Common myeloid progenitor, CD34-positive (primary cell): ENCODE measurements at regions of chr18 and their contacts with region 1.

Region 1: GRCh38 chr18:34221971-34222306 is 2.8 kb downstream of the NOL4 start:
- DNase-seq: peak in 2 of 3 donors; percentile 13 to 14
- H3K4me3 ChIP-seq: no peak overlapping the region
- H3K27ac ChIP-seq: no peak overlapping the region
- H3K4me1 ChIP-seq: peaks cover 0 to 28% (median 13%) of the 10 kb centered on the region in 4 experiments
- H3K27me3 ChIP-seq: peaks cover 4 to 80% (median 43%) of the 10 kb centered on the region in 5 experiments

Region 2: GRCh38 chr18:33231474-33232317 is 990.2 kb before region 1 on chr18:
- CTCF ChIA-PET with region 1: no interaction called
- POLR2A ChIA-PET with region 1: interaction called, 11 read pairs
- DNase-seq: peak; percentile 37 to 64 (median 56)
- H3K4me3 ChIP-seq: no peak overlapping the region
- H3K27ac ChIP-seq: no peak overlapping the region
- H3K4me1 ChIP-seq: no peaks in the 10 kb centered on the region
- H3K27me3 ChIP-seq: no peaks in the 10 kb centered on the region

Region 3: GRCh38 chr18:34242740-34243139 is 20.8 kb after region 1 on chr18:
- CTCF ChIA-PET with region 1: no interaction called
- POLR2A ChIA-PET with region 1: no interaction called
- DNase-seq: no peak
- H3K4me3 ChIP-seq: no peak overlapping the region
- H3K27ac ChIP-seq: no peak overlapping the region
- H3K4me1 ChIP-seq: no peaks in the 10 kb centered on the region
- H3K27me3 ChIP-seq: no peaks in the 10 kb centered on the region